Activated CD4-positive, alpha-beta T cell treated with anti-CD3 and anti-CD28 coated beads, Interleukin-2, amount 10 ng/mL, durations not matched to agents 24 days and 14 days (primary cell): ENCODE measurements at regions of chr14 and their contacts with region 1.

Region 1: GRCh38 chr14:21455911-21456667 is at the start of gene CHD8:
- DNase-seq: peak; percentile 100
- H3K4me3 Mint-ChIP-seq: peak within 1 kb of the TSS; percentile 95
- H3K27ac Mint-ChIP-seq: peak within 1 kb of the TSS; percentile 97
- H3K4me1 Mint-ChIP-seq: peaks cover 26% of the 10 kb centered on the region
- H3K27me3 Mint-ChIP-seq: no peaks in the 10 kb centered on the region
- total RNA-seq, gene CHD8: 104 and 115 TPM in 2 replicates

Region 2: GRCh38 chr14:21103710-21104447 is 352.2 kb before region 1 on chr14:
- intact Hi-C with region 1: loop called (anchors 10 kb)
- DNase-seq: peak; percentile 98
- H3K4me3 Mint-ChIP-seq: peak overlapping the region; percentile 93
- H3K27ac Mint-ChIP-seq: peak overlapping the region; percentile 94
- H3K4me1 Mint-ChIP-seq: peaks cover 35% of the 10 kb centered on the region
- H3K27me3 Mint-ChIP-seq: peaks cover 9% of the 10 kb centered on the region

Region 3: GRCh38 chr14:21262987-21263655 is 193.0 kb before region 1 on chr14:
- intact Hi-C with region 1: no loop called
- DNase-seq: no peak
- H3K4me3 Mint-ChIP-seq: peak overlapping the region; percentile 92
- H3K27ac Mint-ChIP-seq: peak overlapping the region; percentile 97
- H3K4me1 Mint-ChIP-seq: peaks cover 65% of the 10 kb centered on the region
- H3K27me3 Mint-ChIP-seq: no peaks in the 10 kb centered on the region

Region 4: GRCh38 chr14:21414137-21414631 is 41.9 kb before region 1 on chr14:
- intact Hi-C with region 1: loop called (anchors 1 kb)
- DNase-seq: no peak
- H3K4me3 Mint-ChIP-seq: peak overlapping the region; percentile 11
- H3K27ac Mint-ChIP-seq: peak overlapping the region; percentile 86
- H3K4me1 Mint-ChIP-seq: peaks cover 14% of the 10 kb centered on the region
- H3K27me3 Mint-ChIP-seq: no peaks in the 10 kb centered on the region

Region 5: GRCh38 chr14:21476925-21477681 is 21.0 kb after region 1 on chr14 and contains the starts of genes RAB2B and TOX4:
- intact Hi-C with region 1: loop called (anchors 1 kb)
- DNase-seq: peak; percentile 99
- H3K4me3 Mint-ChIP-seq: peak within 1 kb of the TSS; percentile 99
- H3K27ac Mint-ChIP-seq: peak within 1 kb of the TSS; percentile 99
- H3K4me1 Mint-ChIP-seq: peaks cover 23% of the 10 kb centered on the region
- H3K27me3 Mint-ChIP-seq: no peaks in the 10 kb centered on the region
- total RNA-seq, gene RAB2B: 26.5 and 30.1 TPM in 2 replicates
- total RNA-seq, gene TOX4: 75.9 and 82.8 TPM in 2 replicates

Region 6: DNA sequence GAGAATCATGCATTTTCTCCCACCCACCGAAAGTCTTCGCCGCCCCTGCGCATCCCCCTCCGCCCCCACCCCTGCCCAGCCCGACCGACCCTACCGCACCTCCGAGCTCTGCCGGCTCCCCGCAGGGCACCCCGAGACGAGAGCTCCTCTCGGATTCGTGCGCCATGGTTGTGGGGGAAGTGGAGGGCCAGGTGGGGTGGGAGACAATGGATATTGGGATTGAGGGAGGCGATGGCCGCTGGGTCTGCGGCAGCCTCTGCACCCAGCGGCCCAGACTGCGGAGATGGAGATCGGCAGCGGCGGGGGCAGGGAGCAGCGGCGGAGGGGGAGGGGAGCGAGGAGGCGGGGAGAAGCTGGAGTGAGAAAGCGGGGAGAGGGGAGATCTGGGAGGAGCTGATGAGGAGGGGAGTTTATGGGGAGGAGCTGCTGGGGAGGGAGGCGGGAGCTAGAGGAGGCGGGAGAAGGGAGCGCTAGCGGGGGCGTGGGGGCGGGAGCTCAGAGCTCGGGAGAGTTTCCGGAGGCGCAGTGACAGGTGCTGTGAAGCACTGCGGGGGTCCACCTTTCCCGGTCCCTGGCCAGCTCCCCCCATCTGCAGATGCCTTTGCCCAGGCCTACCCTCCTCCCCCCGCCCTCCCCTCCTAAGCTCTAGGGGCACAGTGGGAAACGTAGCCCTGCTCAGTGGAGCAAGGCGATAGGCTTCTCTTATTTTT is 70.0 kb after region 1 on chr14 and contains the start of gene SALL2:
- intact Hi-C with region 1: loop called (anchors 1 kb)
- DNase-seq: peak; percentile 87
- H3K4me3 Mint-ChIP-seq: peak within 1 kb of the TSS; percentile 80
- H3K27ac Mint-ChIP-seq: peak within 1 kb of the TSS; percentile 66
- H3K4me1 Mint-ChIP-seq: peaks cover 12% of the 10 kb centered on the region
- H3K27me3 Mint-ChIP-seq: peaks cover 17% of the 10 kb centered on the region
- total RNA-seq, gene SALL2: 1.6 and 1.7 TPM in 2 replicates

Region 7: GRCh38 chr14:21626491-21627230 is 170.6 kb after region 1 on chr14:
- intact Hi-C with region 1: no loop called
- DNase-seq: no peak
- H3K4me3 Mint-ChIP-seq: no peak overlapping the region
- H3K27ac Mint-ChIP-seq: no peak overlapping the region
- H3K4me1 Mint-ChIP-seq: no peaks in the 10 kb centered on the region
- H3K27me3 Mint-ChIP-seq: peaks cover 12% of the 10 kb centered on the region